Posterior cingulate gyrus (tissue), 11 donors: ENCODE measurements at regions of chr7 and their contacts with region 1.

Region 1: GRCh38 chr7:125061776-125062397 is 132.3 kb upstream of the POT1 start:
- DNase-seq: no peak

Region 2: DNA sequence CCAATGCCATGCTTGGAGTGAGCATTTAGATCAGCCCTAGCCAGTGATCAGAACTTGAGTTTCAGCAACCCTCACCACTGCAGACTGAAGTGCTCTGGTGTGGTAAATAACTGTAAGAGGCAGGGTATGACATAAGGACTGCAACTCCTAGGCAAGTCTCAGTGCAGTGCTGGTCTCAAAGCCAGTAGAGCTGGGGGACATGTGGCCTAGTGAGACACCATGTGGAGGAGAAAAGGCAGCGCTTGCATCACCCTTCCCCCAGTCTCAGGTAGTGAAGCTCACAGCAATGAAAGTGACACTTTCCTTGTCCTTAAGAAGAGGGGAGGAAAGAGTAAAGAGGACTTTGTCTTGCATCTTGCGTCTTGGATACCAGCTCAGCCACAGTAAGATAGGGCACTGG is 254.6 kb after region 1 on chr7:
- intact Hi-C with region 1: loop called (anchors 10 kb)
- DNase-seq: peak in 2 of 10 donors; percentile 14 to 76

Region 3: DNA sequence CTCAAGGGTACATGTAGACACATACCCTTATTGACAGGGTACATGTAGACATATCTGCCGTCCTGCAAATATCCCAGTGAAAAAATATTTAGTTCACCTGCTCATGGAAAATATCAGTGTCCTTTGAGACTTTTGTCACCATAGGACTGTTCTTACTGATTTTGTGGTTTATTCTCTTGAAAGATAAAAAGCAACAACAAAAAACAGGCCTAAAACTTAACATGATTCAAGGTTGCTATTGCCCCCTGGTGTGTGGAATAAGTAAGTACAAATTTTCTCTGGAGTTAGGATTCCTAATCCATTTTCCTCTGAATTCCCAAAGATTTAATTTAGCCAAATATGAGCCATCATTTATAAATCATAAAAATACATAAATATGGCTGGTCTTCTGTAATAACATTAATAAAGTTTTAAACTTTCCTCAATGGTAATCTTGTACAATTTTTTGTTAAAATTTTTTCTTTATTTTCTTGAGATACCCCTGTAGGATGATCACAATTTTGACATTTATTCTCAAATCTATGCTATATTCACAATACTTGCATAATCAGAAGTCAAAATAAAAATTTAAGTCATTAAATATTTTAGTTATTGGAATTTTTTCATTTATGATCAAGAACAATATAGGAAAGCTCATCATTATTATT is 609.2 kb after region 1 on chr7:
- intact Hi-C with region 1: loop called (anchors 2 kb)
- DNase-seq: no peak